ENCODE measurements at regions of chr3 and their contacts with region 1.

Region 1: DNA sequence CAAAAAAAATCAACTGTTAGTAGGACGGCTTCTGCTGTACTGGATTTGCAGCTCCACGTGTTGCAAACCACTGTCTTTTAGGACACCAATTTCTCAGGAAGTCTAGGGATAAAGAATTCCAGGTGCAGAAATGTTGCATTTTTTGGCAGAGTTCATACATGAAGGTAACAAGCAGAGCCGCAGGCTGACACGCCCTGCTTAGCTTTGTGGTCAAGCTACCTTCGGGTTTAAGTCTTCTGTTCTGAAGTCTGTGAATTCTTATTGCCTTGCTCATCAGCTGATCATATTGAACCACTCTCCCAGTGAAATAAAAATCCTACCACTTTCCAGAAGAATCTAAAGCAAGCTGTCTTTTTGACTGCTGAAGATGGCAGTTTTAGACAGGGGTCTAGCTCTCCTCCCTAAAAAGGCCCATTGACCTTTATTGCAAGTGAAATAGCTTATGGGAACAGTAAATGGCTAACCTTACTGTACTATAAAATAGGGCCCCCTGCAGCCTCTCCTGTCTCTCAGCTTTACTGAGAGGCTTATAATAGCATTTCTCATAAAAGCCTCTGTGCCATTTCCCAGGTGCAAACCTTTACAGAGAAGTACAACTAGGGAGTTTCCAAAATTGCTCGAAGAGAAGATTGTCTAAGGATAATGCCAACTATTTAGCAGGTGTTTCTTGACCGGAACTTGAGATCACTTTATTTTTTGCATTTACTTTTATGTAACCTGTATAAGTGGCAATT is 262.2 kb upstream of the IL12A start:
- DNase-seq: no peak
- H3K4me3 ChIP-seq: no peak overlapping the region
- H3K27ac ChIP-seq: no peak overlapping the region
- H3K4me1 ChIP-seq: peaks cover 27% of the 10 kb centered on the region
- H3K27me3 ChIP-seq: peaks cover 2 to 5% of the 10 kb centered on the region in 2 experiments
- CTCF ChIP-seq: no peak
- POLR2A ChIP-seq: no peak

Region 2: GRCh38 chr3:159796744-159797143 is 70.3 kb after region 1 on chr3:
- CTCF ChIA-PET with region 1: no interaction called
- POLR2A ChIA-PET with region 1: no interaction called
- dilution Hi-C with region 1: no loop called
- intact Hi-C with region 1: loop called (anchors 5 kb)
- DNase-seq: peak; percentile 86
- H3K4me3 ChIP-seq: no peak overlapping the region
- H3K27ac ChIP-seq: peak overlapping the region; percentile 79
- H3K4me1 ChIP-seq: peaks cover 40% of the 10 kb centered on the region
- H3K27me3 ChIP-seq: no peaks in the 10 kb centered on the region
- CTCF ChIP-seq: no peak
- POLR2A ChIP-seq: no peak